ENCODE measurements at regions of chr10 and their contacts with region 1.

Region 1: DNA sequence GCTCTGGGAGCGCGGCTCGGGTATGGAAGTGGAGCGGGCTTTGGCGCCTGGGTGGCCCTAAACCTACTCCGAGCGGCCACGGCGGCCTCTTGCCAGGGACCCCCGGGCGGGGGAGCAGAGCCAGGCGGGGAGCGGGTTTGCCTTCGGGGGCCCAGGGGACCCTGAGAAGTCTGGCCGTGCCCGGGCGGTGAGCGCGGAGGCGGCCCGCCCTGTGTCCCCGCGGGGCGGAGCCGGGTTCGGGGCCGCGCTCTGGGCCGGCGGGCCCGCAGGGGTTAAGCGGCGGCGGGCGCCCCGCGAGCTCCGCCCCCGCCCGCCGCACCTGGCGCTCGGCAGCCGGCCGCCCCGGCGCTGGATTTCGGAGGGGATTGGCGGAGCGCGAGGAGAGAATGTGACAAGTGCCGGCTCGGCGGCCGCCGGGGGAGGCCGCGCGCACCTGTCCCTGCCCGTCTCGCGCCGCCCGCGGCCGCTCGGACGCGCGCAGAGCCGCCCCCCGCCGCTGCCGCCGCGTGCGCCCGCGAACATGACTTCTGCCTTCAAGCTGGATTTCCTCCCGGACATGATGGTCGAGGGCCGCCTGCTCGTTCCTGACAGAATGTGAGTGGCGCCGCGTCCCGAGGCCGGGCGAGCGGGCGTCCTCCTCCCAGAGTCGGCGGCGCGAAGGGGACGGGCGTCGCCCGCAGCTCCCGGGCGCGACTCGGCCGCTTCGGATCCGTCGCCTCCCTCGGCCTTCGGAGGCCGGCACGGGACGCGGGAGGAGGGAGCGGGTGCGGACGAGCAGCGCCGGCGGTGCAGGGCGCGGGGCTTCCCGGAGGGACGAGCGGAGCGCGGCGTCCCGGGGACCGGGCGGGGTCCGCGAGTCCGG is at the start of gene CELF2:
- DNase-seq: peak; percentile 81
- ATAC-seq: peak; percentile 79
- total RNA-seq, gene CELF2: 71.2 TPM

Region 2: DNA sequence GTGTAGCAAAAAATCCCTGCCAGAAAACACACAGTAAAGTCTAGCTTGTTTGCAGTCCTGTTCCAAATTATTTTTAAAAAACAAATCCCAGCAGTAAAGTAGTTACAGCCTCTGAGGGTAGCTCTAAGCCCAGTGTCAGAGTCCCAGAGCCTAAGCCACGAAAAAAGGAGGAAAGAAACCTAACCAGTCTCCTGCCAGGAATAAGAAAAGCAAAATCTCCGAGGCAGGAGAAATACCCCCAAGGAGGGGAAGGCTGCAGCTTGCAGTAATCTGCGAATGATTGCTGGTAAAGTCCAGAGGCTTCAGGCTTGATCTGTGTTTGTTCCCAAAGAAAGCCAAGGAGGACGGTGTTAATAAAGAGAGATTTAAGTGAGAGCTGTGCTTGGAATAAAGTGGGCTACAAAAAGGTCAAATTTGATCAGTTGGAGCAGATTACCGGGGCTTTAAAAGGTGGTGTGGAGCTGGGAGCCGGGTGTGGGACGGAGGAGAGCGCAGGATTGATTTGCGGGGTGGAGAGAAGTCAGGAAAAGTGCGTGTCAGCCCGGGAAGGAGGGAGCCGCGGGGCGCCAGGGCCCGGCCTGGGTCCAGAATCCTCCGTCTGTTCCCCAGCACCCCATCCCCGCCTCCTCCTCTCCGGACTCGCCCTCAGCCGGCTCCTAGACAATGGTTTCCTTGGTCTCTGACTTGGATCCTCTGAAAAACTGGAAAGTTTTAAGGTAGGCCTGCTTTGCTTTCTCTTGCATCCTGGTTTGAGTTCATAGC is 219.5 kb before region 1 on chr10:
- intact Hi-C with region 1: loop called (anchors 5 kb)
- DNase-seq: no peak
- ATAC-seq: peak; percentile 75

Region 3: GRCh38 chr10:10824591-10825148 is 193.1 kb before region 1 on chr10:
- intact Hi-C with region 1: loop called (anchors 10 kb)
- DNase-seq: peak; percentile 76
- ATAC-seq: peak; percentile 86

Region 4: DNA sequence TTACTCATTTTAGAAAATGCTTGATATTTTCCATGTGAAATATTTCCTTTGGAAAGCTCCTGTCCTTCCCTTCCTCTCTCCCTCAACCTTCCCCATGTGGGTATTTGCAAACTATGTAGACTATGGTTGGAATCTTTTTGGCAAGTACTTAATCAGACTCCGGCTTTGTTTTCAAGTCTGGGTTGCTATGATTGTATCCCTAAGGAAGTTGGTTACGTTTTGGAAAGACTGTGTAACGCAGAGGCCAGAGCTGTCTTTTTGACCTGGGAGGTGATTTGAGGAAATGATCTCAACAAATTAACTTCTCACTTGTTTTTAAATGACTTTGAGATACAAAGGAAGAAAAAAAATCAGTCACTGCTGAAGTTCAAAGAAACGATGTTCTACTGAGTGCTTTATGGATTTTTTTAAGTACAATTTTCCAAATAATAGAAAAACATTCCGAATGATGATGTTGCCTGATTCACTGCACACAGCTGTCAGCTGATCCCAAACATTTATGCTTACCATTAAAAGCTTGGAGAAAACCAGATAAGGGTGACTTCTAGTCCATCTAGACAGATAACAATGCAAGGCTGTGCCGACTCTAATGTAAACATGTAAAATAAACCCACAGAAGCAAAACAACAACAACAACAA is 145.6 kb before region 1 on chr10:
- intact Hi-C with region 1: loop called (anchors 2 kb)
- DNase-seq: no peak
- ATAC-seq: peak; percentile 95

Region 5: DNA sequence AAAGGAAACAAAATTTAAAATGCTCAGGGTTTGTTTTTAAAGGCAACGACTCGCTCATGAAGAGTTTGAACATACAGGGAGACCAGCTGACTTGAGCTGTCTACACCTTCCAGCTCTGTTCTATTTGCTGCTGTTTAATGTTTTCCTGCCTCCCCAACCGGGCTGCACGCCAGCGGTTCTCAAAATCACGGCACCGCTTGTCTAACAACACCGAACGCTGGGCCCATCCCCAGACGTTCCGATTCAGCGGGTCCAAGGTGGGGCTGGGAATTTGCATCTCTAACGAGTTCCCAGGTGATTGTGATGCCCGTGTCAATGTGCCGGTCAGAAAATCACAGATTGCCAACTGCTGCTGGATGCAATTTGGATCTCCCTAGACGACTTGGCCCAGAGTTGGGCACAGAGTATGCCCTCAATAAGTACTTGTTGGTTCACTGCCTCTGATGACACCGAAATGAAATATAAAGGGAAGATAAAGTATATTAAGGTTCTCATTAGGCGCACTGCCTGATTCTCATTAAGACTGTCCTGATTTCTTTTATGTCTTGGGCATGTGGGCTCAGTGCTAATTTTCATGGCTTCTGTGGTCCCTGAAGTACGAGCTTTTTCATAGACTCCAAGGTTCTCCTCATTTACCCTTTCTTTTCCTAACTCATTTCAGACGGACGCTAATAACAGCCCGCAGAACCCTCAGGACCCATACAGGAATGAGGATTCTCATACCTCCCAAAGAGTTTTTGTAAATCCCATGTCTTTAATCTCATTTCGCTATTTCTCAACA is 28.4 kb after region 1 on chr10:
- intact Hi-C with region 1: loop called (anchors 2 kb)
- DNase-seq: peak; percentile 91
- ATAC-seq: peak; percentile 82

Region 6: GRCh38 chr10:11113156-11113555 is 95.4 kb after region 1 on chr10:
- intact Hi-C with region 1: no loop called
- DNase-seq: no peak
- ATAC-seq: no peak

Region 7: DNA sequence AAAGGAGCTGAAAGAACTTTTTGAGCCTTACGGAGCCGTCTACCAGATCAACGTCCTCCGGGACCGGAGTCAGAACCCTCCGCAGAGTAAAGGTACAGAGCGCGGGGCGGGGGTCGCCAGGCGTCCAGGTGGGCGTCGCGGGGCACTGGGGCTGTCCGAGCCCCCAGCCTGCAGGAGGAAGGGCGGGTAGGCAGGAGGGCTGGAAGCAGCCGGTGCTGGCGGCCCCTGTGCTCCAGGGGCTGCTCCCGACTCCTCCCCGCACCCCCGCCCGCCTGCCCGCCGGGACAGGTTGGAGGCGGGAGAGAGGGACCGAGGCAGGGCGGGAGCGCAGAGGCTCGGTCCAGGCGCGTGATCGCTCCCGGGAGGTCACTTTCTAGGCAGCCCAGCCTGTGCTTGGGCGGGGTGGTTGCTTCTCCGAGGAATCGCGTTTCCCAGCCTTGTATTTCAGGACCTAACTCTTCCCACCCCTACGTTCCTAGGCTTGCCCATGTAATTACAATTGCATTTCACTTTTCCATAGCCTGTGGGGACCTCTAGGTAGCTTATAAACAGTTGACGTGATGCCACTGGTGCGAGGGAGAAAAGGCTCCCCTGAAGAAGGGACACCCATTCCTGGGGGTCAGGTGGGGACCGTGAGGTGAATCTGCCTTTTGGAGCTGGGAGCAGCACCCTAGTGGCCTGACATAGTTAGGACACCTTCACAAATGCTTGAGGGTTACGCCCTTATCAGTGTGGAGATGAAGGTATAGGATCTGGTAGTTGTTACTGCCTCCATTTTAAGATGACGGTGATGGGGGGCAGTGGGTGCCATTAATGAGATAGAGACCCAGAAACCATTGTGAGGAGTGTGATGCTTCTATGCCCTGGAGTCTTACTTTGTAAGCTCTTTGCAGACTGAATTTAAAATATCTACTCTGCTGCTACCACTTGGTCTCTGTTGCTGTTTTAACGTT is 148.1 kb after region 1 on chr10:
- intact Hi-C with region 1: loop called (anchors 5 kb)
- DNase-seq: peak; percentile 84
- ATAC-seq: peak; percentile 81